Activated T-helper 1 cell treated with anti-CD3 and anti-CD28 coated beads, Interleukin-12 subunit alpha, Interleukin-12 subunit beta, Interleukin-2, Interleukin-4 antibody, amounts not matched to agents 30 ng/mL and 10 ng/mL and 1 ng/mL, durations not matched to agents 14 hours and 24 hours and 36 hours (primary cell): ENCODE measurements at regions of chr22 and their contacts with region 1.

Region 1: GRCh38 chr22:22397875-22398524 is 110.5 kb downstream of the ZNF280B start:
- DNase-seq: no peak
- H3K4me3 Mint-ChIP-seq: no peak overlapping the region
- H3K27ac Mint-ChIP-seq: no peak overlapping the region
- H3K4me1 Mint-ChIP-seq: no peaks in the 10 kb centered on the region
- H3K27me3 Mint-ChIP-seq: peaks cover 21% of the 10 kb centered on the region

Region 2: GRCh38 chr22:22348127-22348814 is 49.7 kb before region 1 on chr22:
- intact Hi-C with region 1: loop called (anchors 1 kb)
- DNase-seq: no peak
- H3K4me3 Mint-ChIP-seq: no peak overlapping the region
- H3K27ac Mint-ChIP-seq: no peak overlapping the region
- H3K4me1 Mint-ChIP-seq: no peaks in the 10 kb centered on the region
- H3K27me3 Mint-ChIP-seq: peaks cover 25% of the 10 kb centered on the region